ENCODE measurements at regions of chrX and their contacts with region 1.

Region 1: DNA sequence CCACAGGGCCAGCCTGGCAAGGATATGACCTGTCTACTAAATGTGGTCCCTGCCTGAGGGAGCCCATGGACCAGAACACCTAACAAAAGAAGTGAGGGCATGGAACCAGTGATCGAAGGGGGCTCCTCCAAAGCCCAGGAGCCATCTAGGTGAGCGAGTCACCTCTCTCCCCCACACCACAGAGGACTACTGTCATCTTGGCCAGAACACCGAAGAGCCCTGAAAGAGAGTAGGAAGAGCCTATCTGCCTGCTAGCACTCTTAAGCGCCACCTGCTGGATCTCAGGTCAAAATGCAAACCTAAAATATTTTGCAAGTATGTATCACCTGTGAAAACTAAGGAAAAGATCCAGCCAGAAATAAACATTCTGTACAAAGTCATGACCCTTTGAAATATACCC is 137.9 kb upstream of the ZXDB start:
- DNase-seq: no peak
- ATAC-seq: no peak
- H3K4me3 ChIP-seq: no peak overlapping the region
- H3K27ac ChIP-seq: no peak overlapping the region
- H3K4me1 ChIP-seq: no peaks in the 10 kb centered on the region
- H3K27me3 ChIP-seq: peaks cover 0 to 6% (median 0%) of the 10 kb centered on the region in 3 donors
- CTCF ChIP-seq: peak; percentile 48

Region 2: GRCh38 chrX:57156397-57157049 is 297.4 kb before region 1 on chrX:
- intact Hi-C with region 1: loop called in 1 of 2 experiments (anchors 5 kb)
- DNase-seq: no peak
- ATAC-seq: peak in 1 of 4 donors; percentile 38
- H3K4me3 ChIP-seq: no peak overlapping the region
- H3K27ac ChIP-seq: no peak overlapping the region
- H3K4me1 ChIP-seq: no peaks in the 10 kb centered on the region
- H3K27me3 ChIP-seq: no peaks in the 10 kb centered on the region
- CTCF ChIP-seq: peak; percentile 42